ENCODE measurements at regions of chr2 and their contacts with region 1.

Region 1: GRCh38 chr2:240021488-240022104 is 3.5 kb downstream of the NDUFA10 start:
- DNase-seq: peak; percentile 26 to 79 (median 58)
- ATAC-seq: peak; percentile 40
- H3K4me3 ChIP-seq: no peak overlapping the region
- H3K4me3 Mint-ChIP-seq: peak overlapping the region; percentile 54
- H3K27ac ChIP-seq: no peak overlapping the region
- H3K27ac Mint-ChIP-seq: peak overlapping the region; percentile 30
- H3K4me1 ChIP-seq: peaks cover 21% of the 10 kb centered on the region
- H3K4me1 Mint-ChIP-seq: peaks cover 44% of the 10 kb centered on the region
- H3K27me3 ChIP-seq: no peaks in the 10 kb centered on the region
- H3K27me3 Mint-ChIP-seq: no peaks in the 10 kb centered on the region
- CTCF ChIP-seq: peak; percentile 61

Region 2: DNA sequence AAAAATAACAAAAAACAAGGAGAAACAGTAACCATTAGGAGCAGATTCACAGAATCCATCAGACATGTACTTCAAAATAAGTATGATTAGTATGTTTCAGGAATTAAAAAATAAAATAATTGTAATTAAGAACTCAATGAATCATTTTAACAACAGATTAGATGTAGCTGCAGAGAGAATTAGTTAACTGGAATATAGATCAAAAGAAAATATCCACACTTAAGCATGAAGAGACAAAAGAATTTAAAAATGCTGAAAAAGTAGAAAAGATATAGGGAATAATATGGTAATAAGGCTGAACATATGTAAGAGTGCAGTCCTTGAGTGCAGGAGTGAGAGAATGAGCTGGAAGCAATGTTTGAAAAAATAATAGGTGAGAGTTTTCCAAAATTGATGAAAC is 55.8 kb after region 1 on chr2:
- CTCF ChIA-PET with region 1: no interaction called
- POLR2A ChIA-PET with region 1: no interaction called
- intact Hi-C with region 1: no loop called
- DNase-seq: no peak
- ATAC-seq: no peak
- H3K4me3 ChIP-seq: no peak overlapping the region
- H3K4me3 Mint-ChIP-seq: no peak overlapping the region
- H3K27ac ChIP-seq: no peak overlapping the region
- H3K27ac Mint-ChIP-seq: no peak overlapping the region
- H3K4me1 ChIP-seq: no peaks in the 10 kb centered on the region
- H3K4me1 Mint-ChIP-seq: no peaks in the 10 kb centered on the region
- H3K27me3 ChIP-seq: peaks cover 3 to 12% of the 10 kb centered on the region in 2 experiments
- H3K27me3 Mint-ChIP-seq: peaks cover 53% of the 10 kb centered on the region
- CTCF ChIP-seq: no peak

Region 3: DNA sequence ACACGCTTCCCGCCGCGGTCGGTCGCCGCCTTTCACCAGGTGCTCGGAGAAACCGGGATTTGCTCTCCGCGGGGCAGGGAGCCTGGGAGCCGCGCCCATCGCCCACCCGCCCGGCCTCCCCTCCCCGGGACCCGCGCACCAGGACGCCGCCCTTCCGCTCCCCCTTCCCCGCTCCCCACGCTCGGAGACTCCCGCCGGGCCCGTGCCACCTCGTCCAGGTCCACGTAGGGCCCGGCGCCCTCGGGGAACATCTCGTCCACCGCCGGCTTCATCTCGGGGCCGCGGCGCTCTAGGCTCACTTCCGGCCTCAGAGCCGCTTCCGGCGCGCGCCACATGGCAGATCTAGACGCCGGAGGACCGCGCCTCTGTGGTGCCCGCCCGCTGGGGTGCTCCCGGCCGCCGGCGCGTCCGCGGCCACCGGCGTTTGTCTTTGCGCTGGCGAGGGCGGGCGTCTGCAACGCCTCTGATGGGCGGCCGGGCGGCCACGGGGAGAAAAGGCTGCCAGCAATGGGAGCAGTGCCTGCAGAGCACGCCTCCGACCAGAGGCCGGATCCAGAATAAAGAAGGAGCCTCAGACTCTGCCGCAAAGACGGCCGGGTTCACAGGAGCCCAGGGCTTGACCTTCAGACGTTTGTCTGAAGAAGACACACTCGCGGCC is 114.5 kb after region 1 on chr2 and contains the start of gene COPS9:
- CTCF ChIA-PET with region 1: no interaction called
- POLR2A ChIA-PET with region 1: no interaction called
- intact Hi-C with region 1: loop called in 1 of 2 experiments (anchors 2 kb)
- DNase-seq: peak; percentile 80 to 93 (median 86)
- ATAC-seq: peak; percentile 94
- H3K4me3 ChIP-seq: peak within 1 kb of the TSS; percentile 94
- H3K4me3 Mint-ChIP-seq: peak within 1 kb of the TSS; percentile 95
- H3K27ac ChIP-seq: peak within 1 kb of the TSS; percentile 24 to 40
- H3K27ac Mint-ChIP-seq: peak within 1 kb of the TSS; percentile 71
- H3K4me1 ChIP-seq: peaks cover 33% of the 10 kb centered on the region
- H3K4me1 Mint-ChIP-seq: peaks cover 33% of the 10 kb centered on the region
- H3K27me3 ChIP-seq: no peaks in the 10 kb centered on the region
- H3K27me3 Mint-ChIP-seq: no peaks in the 10 kb centered on the region
- CTCF ChIP-seq: no peak
- total RNA-seq, gene COPS9: 46.7 to 48.5 TPM

Measured in CD4-positive, alpha-beta T cell (primary cell).